K562 (cell line): ENCODE measurements at regions of chr4 and their contacts with region 1.

Region 1: DNA sequence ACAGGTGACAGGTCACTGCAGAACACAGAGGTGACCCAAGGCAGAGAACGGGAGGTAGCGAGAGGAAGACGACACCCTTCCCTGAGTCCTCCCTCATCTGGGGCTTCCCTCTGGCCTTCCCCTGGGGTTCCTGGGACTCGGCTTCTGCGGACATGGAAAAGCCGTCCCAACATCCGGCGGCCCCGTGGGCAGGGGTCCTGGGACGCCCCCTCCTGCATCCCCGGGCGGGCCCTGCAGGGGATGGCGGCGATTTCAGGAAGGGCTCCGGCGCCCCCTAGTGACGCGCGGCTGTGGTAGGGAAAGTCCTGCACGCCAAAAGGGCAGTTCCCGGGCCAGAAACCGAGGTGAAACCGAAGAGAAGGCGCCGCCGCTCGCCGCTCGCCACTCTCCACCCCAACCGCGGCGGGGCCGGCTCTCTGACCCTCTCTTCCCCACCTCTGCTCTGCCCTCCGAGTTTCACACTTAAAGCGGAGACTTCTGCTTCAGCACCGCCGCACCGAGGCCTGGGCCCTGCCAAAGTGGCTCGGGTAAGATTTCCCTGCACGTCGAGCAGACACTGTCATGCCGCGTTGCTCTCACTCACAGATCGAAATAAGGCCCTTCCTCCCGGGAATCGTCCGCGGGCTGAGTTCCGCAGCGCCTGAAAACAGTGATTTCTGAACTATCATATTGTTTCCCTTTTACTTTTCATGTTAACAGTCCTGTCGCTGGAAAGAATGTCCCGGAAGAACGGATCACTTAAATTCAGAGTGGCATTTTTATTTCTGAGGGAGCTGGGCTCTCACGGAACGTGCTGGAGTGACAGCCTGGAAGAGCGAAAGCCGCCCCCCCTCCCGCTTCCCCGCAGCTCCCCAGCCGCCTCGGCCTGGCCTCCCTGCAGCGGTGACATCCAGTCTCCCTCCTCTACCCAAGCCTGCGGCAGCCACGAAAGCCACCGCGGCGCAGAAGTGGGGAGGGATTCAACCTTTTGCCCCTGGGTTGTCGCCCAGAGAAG is 110.6 kb downstream of the DCTD start:
- DNase-seq: peak; percentile 70 to 77 (median 76)
- ATAC-seq: peak; percentile 99
- H3K4me3 ChIP-seq: no peak overlapping the region
- H3K27ac ChIP-seq: no peak overlapping the region
- H3K4me1 ChIP-seq: peaks cover 0 to 19% of the 10 kb centered on the region in 2 experiments; a peak in 3 of 5 replicates
- H3K27me3 ChIP-seq: peaks cover 11 to 28% of the 10 kb centered on the region in 2 experiments; a peak in 3 of 5 replicates
- CTCF ChIP-seq: peak; percentile 81 to 95 (median 83)
- EP300 ChIP-seq: no peak
- POLR2A ChIP-seq: no peak
- RAD21 ChIP-seq: peak; percentile 56 to 79

Region 2: DNA sequence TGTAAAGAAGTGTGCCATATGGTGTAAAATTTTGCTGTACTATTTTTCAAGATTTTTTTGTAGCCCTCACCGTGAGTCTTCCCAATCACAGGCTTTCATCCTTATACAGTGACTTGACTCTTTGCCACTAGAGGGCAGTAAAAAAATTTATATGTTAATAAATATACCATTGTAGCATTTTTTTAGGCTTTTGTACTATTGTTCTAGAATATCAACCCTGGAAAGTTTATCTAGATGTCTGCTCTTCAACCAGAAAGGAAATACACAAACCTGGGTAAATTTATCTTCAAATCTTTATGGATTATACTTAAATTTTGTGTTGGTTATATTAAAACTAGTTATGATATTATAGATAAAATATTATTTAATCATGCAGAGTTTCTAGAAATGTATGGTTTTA is 328.1 kb before region 1 on chr4:
- CTCF ChIA-PET with region 1: interaction called, 6 read pairs
- POLR2A ChIA-PET with region 1: no interaction called
- in situ Hi-C with region 1: no loop called
- intact Hi-C with region 1: loop called (anchors 2 kb)
- DNase-seq: peak; percentile 7 to 26 (median 18)
- ATAC-seq: peak; percentile 74
- H3K4me3 ChIP-seq: no peak overlapping the region
- H3K27ac ChIP-seq: no peak overlapping the region
- H3K4me1 ChIP-seq: no peaks in the 10 kb centered on the region
- H3K27me3 ChIP-seq: no peaks in the 10 kb centered on the region
- CTCF ChIP-seq: peak; percentile 24 to 48 (median 26); a peak in 3 of 6 replicates
- EP300 ChIP-seq: no peak
- POLR2A ChIP-seq: no peak
- RAD21 ChIP-seq: peak in 1 of 2 experiments; percentile 20; a peak in 1 of 4 replicates

Region 3: DNA sequence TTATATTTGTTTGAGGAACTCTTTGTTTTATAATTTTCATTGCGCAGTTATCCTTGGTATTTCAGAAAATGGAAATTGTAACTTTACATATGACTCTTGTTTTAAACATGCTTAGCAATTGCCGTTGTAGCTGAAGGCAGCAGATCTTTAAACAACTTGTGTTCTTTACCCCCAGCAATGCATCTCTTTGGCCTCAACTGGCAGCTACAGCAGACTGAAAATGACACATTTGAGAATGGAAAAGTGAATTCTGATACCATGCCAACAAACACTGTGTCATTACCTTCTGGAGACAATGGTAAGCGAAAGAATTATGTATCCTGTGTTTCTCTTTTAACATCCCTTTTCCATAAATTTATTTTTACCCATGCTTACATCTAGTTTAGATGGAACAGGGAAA is 153.0 kb before region 1 on chr4:
- CTCF ChIA-PET with region 1: no interaction called
- POLR2A ChIA-PET with region 1: no interaction called
- in situ Hi-C with region 1: no loop called
- intact Hi-C with region 1: loop called (anchors 10 kb)
- DNase-seq: no peak
- ATAC-seq: no peak
- H3K4me3 ChIP-seq: no peak overlapping the region
- H3K27ac ChIP-seq: no peak overlapping the region
- H3K4me1 ChIP-seq: no peaks in the 10 kb centered on the region
- H3K27me3 ChIP-seq: peaks cover 0 to 2% of the 10 kb centered on the region in 2 experiments; a peak in 1 of 5 replicates
- CTCF ChIP-seq: no peak
- EP300 ChIP-seq: no peak
- POLR2A ChIP-seq: no peak
- RAD21 ChIP-seq: no peak

Region 4: GRCh38 chr4:182818926-182819730 is 12.6 kb after region 1 on chr4:
- CTCF ChIA-PET with region 1: no interaction called
- POLR2A ChIA-PET with region 1: no interaction called
- in situ Hi-C with region 1: no loop called
- intact Hi-C with region 1: no loop called
- DNase-seq: no peak
- ATAC-seq: no peak; the same call in 2 of the 3 replicates
- H3K4me3 ChIP-seq: no peak overlapping the region
- H3K27ac ChIP-seq: no peak overlapping the region
- H3K4me1 ChIP-seq: no peaks in the 10 kb centered on the region
- H3K27me3 ChIP-seq: peaks cover 4 to 44% of the 10 kb centered on the region in 2 experiments; a peak in 3 of 5 replicates
- CTCF ChIP-seq: no peak
- EP300 ChIP-seq: no peak
- POLR2A ChIP-seq: no peak
- RAD21 ChIP-seq: no peak

Region 5: GRCh38 chr4:182885738-182886077 is 79.2 kb after region 1 on chr4:
- CTCF ChIA-PET with region 1: no interaction called
- POLR2A ChIA-PET with region 1: no interaction called
- in situ Hi-C with region 1: no loop called
- intact Hi-C with region 1: no loop called
- DNase-seq: no peak
- ATAC-seq: no peak
- H3K4me3 ChIP-seq: no peak overlapping the region
- H3K27ac ChIP-seq: no peak overlapping the region
- H3K4me1 ChIP-seq: 0 out of 5 replicates have a peak, but pooled peaks cover 0 to 3% of the 10 kb centered on the region in 2 experiments
- H3K27me3 ChIP-seq: no peaks in the 10 kb centered on the region
- CTCF ChIP-seq: no peak
- EP300 ChIP-seq: no peak
- POLR2A ChIP-seq: no peak
- RAD21 ChIP-seq: no peak

Region 6: GRCh38 chr4:182925298-182925738 is 118.8 kb after region 1 on chr4:
- CTCF ChIA-PET with region 1: interaction called, 3 read pairs
- POLR2A ChIA-PET with region 1: no interaction called
- in situ Hi-C with region 1: no loop called
- intact Hi-C with region 1: loop called (anchors 5 kb)
- DNase-seq: peak; percentile 48 to 90 (median 63)
- ATAC-seq: peak; percentile 99
- H3K4me3 ChIP-seq: no peak overlapping the region
- H3K27ac ChIP-seq: no peak overlapping the region
- H3K4me1 ChIP-seq: peaks cover 0 to 3% of the 10 kb centered on the region in 2 experiments; a peak in 1 of 5 replicates
- H3K27me3 ChIP-seq: no peaks in the 10 kb centered on the region
- CTCF ChIP-seq: peak; percentile 95 to 98 (median 98)
- EP300 ChIP-seq: no peak
- POLR2A ChIP-seq: no peak
- RAD21 ChIP-seq: peak; percentile 82 to 84